ENCODE measurements at regions of chr6 and their contacts with region 1.

Region 1: DNA sequence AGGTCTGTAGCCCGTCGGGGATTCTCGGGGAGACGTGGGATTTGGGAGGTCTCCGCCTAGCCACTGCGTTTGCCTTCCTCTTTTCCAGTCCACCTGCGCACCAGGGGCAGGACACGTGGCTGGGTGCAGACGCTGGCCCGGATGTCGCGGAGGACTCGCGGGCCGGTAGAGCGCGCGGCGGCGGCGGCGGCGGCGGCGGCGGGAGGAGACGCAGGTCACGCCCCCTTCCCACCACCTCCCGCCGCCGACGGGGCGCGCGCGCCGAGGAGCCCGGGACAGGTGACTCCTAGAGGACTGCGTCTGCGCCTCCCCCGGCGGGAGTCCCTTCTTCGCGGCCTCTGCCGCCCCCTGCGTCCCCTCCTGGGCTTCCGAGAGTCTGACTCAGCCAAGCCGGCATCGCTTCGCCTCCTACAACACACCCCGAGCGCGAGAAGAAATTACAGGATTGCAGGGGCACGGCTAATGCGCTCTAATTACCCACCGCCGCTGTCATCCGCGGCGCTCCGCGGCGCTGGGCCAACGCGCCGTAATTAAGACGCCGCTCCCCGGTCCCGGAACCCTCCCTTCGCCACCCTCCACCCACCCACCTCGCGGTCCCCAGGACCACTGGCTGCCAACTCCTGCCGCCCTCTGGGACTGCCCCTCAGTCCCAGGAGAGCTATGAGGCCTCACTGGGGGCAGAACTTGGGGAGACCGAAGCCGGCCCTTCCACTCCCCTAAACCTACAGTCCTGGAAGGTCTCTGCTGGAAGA is 124.5 kb downstream of the MRPL14 start:
- DNase-seq: peak; percentile 44 to 64
- ATAC-seq: peak; percentile 15 to 59 (median 36)
- H3K4me3 ChIP-seq: peak overlapping the region; percentile 6 to 45 (median 40)
- H3K27ac ChIP-seq: peak overlapping the region in 9 of 10 donors; percentile 53 to 95 (median 90)
- H3K4me1 ChIP-seq: peaks cover 8 to 64% (median 25%) of the 10 kb centered on the region in 9 donors
- H3K27me3 ChIP-seq: peaks cover 0 to 75% (median 27%) of the 10 kb centered on the region in 7 donors
- CTCF ChIP-seq: peak in 4 of 9 donors; percentile 21 to 43 (median 34)

Region 2: DNA sequence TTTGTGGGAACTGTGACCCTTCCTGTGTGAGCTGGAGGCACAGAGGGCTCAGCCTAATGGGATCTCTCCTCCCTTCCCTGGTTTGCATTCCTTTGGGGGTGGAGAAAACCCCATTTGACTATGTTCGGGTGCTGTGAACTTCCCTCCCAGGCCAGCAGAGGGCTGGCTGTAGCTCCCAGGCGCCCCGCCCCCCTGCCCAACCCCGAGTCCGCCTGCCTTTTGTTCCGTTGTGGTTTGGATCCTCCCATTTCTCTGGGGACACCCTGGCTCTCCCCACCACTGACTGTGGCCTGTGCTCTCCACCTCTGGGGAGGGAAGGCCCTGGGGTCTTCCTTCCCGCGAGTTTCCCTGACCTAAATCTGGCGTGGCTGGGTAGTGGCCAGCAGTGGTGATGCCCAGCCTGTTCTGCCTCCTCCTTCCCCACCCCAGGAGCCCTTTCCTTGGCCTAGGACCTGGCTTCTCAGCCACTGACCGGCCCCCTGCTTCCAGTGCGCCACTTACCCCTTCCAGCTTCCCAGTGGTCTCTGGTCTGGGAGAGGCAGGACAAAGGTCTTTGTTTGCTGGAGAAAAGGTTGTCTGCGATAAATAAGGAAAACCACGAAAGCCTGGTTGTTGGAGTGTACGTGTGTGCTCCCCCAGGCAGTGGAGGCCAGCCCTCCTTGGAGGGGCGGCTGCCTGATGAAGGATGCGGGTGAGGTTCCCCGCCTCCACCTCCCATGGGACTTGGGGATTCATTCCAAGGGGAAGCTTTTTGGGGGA is 227.8 kb before region 1 on chr6:
- intact Hi-C with region 1: loop called in 5 of 10 experiments (anchors 2 to 5 kb)
- DNase-seq: peak; percentile 74 to 81
- ATAC-seq: peak; percentile 1 to 42 (median 14)
- H3K4me3 ChIP-seq: peak overlapping the region in 9 of 10 donors; percentile 85 to 98 (median 95)
- H3K27ac ChIP-seq: peak overlapping the region; percentile 86 to 99 (median 95)
- H3K4me1 ChIP-seq: peaks cover 30 to 81% (median 55%) of the 10 kb centered on the region in 9 donors
- H3K27me3 ChIP-seq: no peaks in the 10 kb centered on the region
- CTCF ChIP-seq: peak; percentile 77 to 88 (median 83)

Region 3: GRCh38 chr6:44064089-44064947 is 61.5 kb after region 1 on chr6:
- intact Hi-C with region 1: loop called in 3 of 10 experiments (anchors 2 to 5 kb)
- DNase-seq: peak in 1 of 2 donors; percentile 70
- ATAC-seq: peak; percentile 11 to 84 (median 54)
- H3K4me3 ChIP-seq: no peak overlapping the region
- H3K27ac ChIP-seq: peak overlapping the region in 8 of 10 donors; percentile 40 to 97 (median 75)
- H3K4me1 ChIP-seq: peaks cover 21 to 79% (median 56%) of the 10 kb centered on the region in 9 donors
- H3K27me3 ChIP-seq: no peaks in the 10 kb centered on the region
- CTCF ChIP-seq: no peak

Measured in heart right ventricle (tissue), 16 donors.